Panc1 (cell line): ENCODE measurements at regions of chr3 and their contacts with region 1.

Region 1: DNA sequence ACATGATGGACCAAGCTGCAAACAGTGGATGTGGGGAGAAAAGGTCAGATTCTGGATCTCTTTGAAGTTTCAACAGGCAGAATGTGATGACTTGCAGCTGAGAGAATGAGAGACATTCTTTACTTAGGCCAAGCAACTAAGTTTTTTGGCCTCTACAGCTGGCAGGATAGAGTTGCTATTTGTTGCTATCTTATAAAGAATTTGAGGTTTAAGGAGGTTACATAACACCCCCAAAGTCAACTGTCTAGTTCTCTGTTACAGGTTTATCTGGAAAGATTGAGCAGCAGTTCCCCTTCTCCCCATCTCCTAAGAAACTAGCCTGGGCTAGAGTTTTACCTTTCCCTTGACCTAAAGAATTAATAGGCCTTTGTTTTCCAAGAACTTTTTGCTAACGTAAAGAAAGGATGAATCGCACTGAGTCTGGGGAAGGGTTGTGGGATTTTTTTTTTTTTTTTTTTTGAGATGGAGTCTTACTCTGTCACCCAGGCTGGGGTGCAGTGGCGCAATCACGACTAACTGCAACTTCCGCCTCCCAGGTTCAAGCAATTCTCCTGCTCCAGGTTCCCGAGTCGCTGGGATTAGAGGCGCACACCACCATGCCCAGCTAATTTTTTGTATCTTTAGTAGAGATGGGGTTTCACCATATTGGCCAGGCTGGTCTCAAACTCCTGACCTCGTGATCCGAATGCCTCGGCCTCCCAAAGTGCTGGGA is 26.6 kb upstream of the SLMAP start:
- DNase-seq: no peak
- ATAC-seq: no peak
- H3K4me3 ChIP-seq: no peak overlapping the region
- H3K27ac ChIP-seq: no peak overlapping the region
- H3K4me1 ChIP-seq: no peaks in the 10 kb centered on the region
- H3K27me3 ChIP-seq: no peaks in the 10 kb centered on the region
- CTCF ChIP-seq: no peak

Region 2: GRCh38 chr3:56825567-56826438 is 903.7 kb before region 1 on chr3:
- CTCF ChIA-PET with region 1: no interaction called
- POLR2A ChIA-PET with region 1: no interaction called
- in situ Hi-C with region 1: no loop called
- intact Hi-C with region 1: no loop called
- DNase-seq: no peak
- ATAC-seq: no peak
- H3K4me3 ChIP-seq: no peak overlapping the region
- H3K27ac ChIP-seq: no peak overlapping the region
- H3K4me1 ChIP-seq: peaks cover 3% of the 10 kb centered on the region
- H3K27me3 ChIP-seq: no peaks in the 10 kb centered on the region
- CTCF ChIP-seq: no peak

Region 3: DNA sequence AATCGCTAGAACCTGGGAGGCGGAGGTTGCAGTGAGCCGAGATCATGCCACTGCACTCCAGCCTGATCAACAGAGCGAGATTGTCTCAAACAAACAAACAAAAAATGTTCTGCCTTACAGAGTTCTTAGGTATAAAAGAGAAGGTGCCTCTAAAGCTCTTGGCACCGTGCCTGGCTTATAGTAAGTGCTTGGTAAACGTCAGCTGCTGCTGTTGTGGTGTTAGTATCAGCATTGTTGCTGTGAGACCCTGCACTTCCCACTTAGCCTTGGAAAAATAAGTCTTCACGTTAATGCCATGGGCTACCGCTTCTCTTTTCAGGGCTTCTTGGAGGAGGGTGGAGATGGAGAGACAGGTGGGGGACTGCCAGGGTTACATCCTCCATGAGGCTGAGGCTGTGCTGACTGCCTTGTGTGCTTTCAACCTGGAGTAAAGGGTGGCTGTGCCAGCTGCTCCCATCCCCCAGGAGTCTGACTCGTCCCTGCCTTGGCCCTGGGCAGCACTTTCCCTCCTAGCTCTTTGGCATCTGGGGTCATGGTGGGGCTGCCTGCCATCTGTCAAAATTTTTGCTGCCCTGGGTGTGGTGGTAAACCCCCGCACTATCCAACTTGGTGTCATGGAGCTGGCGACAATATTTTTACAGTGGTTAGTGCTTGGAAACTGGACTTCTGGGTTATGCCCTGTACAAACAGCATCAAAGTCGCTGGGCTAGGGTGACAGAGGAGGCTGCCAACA is 296.5 kb after region 1 on chr3:
- CTCF ChIA-PET with region 1: no interaction called
- POLR2A ChIA-PET with region 1: no interaction called
- in situ Hi-C with region 1: no loop called
- intact Hi-C with region 1: no loop called
- DNase-seq: no peak
- ATAC-seq: peak; percentile 68
- H3K4me3 ChIP-seq: peak overlapping the region in 1 of 2 experiments; percentile 32; a peak in 2 of 4 replicates
- H3K27ac ChIP-seq: peak overlapping the region; percentile 75
- H3K4me1 ChIP-seq: peaks cover 77% of the 10 kb centered on the region
- H3K27me3 ChIP-seq: no peaks in the 10 kb centered on the region
- CTCF ChIP-seq: no peak

Region 4: GRCh38 chr3:58693929-58694850 is 964.7 kb after region 1 on chr3:
- CTCF ChIA-PET with region 1: no interaction called
- POLR2A ChIA-PET with region 1: interaction called, 12 read pairs
- in situ Hi-C with region 1: no loop called
- intact Hi-C with region 1: no loop called
- DNase-seq: no peak
- ATAC-seq: no peak
- H3K4me3 ChIP-seq: no peak overlapping the region
- H3K27ac ChIP-seq: no peak overlapping the region
- H3K4me1 ChIP-seq: no peaks in the 10 kb centered on the region
- H3K27me3 ChIP-seq: no peaks in the 10 kb centered on the region
- CTCF ChIP-seq: no peak